Gastrocnemius medialis (tissue), 4 donors: ENCODE measurements at regions of chr3 and their contacts with region 1.

Region 1: GRCh38 chr3:122415720-122416654 is at the start of gene WDR5B:
- DNase-seq: peak; percentile 97 to 98
- ATAC-seq: peak; percentile 90
- H3K4me3 ChIP-seq: peak within 1 kb of the TSS; percentile 76 to 97 (median 77)
- H3K27ac ChIP-seq: peak within 1 kb of the TSS; percentile 88 to 98 (median 91)
- H3K4me1 ChIP-seq: peaks cover 35 to 43% of the 10 kb centered on the region in 2 donors
- H3K27me3 ChIP-seq: no peaks in the 10 kb centered on the region
- CTCF ChIP-seq: peak in 1 of 5 experiments; percentile 15
- POLR2A ChIP-seq: peak; percentile 90 to 93
- total RNA-seq, gene WDR5B: 1.4 to 3.0 (median 2.1) TPM

Region 2: DNA sequence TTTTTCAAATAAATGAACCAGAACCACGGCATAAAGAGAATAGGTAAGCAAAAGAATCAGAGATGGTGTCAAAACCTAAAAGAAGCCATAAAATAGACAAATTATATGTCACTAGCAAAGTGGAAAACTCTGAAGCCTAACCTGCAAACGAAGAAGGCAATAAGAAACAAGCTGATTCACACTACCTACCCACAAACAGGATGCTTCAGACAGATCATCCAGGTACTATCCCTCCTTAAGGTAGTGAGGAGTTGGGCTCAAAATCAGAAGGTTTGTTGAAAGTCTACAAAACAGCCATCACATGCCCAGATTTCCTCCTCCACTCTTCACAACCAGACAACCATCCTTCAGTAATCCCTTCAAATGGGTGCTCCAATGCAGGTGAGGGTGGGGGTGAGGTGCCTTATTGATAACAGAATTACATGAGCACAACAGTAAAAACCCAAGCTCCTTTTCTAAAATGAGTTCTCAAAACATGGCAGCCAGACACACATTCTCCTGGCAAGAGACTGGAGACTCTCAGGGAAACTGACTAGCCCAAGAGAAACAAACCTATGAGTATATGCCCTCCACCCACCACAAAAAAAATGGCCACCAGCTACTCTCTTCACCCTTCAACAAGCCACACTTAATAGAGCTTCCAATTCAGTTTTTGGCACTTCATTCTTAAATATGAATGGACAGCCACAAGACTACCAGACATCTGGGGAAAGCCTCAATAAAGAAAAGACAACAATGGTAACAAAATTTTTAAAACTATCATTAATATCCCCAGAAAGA is 92.3 kb after region 1 on chr3:
- in situ Hi-C with region 1: loop called in 2 of 4 experiments (anchors 10 kb)
- intact Hi-C with region 1: no loop called
- DNase-seq: no peak
- ATAC-seq: peak; percentile 11 to 21
- H3K4me3 ChIP-seq: no peak overlapping the region
- H3K27ac ChIP-seq: peak overlapping the region; percentile 94 to 99 (median 97)
- H3K4me1 ChIP-seq: peaks cover 67 to 86% of the 10 kb centered on the region in 2 donors
- H3K27me3 ChIP-seq: no peaks in the 10 kb centered on the region
- CTCF ChIP-seq: no peak
- POLR2A ChIP-seq: no peak

Region 3: GRCh38 chr3:122514123-122515019 is 98.4 kb after region 1 on chr3 and contains the start of gene KPNA1:
- in situ Hi-C with region 1: loop called in 2 of 4 experiments (anchors 10 kb)
- intact Hi-C with region 1: loop called (anchors 1 kb)
- DNase-seq: peak; percentile 90 to 93
- ATAC-seq: peak; percentile 76 to 84
- H3K4me3 ChIP-seq: peak within 1 kb of the TSS; percentile 65 to 94 (median 84)
- H3K27ac ChIP-seq: peak within 1 kb of the TSS; percentile 94 to 99 (median 97)
- H3K4me1 ChIP-seq: peaks cover 39 to 44% of the 10 kb centered on the region in 2 donors
- H3K27me3 ChIP-seq: no peaks in the 10 kb centered on the region
- CTCF ChIP-seq: no peak
- POLR2A ChIP-seq: peak; percentile 99 to 100
- total RNA-seq, gene KPNA1: 108 to 119 (median 112) TPM

Region 4: DNA sequence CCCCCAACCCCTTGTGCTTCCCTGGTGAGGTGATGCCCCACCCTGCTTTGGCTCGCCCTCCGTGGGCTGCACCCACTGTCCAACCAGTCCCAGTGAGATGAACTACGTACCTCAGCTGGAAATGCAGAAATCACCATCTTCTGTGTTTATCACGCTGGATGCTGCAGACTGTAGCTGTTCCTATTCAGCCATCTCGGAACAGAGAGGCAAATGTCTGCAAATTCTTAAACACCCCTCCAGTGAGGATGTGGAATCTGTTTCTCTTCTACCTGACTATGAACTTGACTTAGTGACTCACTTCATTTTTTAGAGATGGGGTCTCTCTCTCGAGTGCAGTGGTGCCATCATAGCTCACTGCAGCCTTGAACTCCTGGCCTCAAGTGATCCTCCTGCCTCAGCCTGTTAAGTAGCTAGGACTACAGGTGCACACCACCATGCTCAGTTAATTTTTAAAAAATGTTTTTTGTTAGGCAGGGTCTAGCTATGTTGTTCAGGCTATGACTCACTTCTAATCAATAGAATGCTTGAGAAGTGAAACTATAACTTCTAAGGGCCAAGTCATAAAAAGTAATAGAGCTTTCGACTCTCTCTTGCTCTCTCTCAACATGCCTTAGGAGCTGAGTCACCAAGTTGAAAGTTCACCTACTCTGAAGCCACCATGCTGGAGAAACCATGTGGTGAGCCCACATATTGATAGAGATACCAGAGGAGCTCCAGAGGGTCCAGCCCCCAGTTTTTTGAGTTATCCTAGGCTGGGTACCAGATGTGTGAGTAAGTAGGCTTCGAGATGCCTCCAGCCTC is 253.1 kb after region 1 on chr3:
- in situ Hi-C with region 1: no loop called
- intact Hi-C with region 1: no loop called
- DNase-seq: no peak
- ATAC-seq: no peak
- H3K4me3 ChIP-seq: no peak overlapping the region
- H3K27ac ChIP-seq: no peak overlapping the region
- H3K4me1 ChIP-seq: no peaks in the 10 kb centered on the region
- H3K27me3 ChIP-seq: no peaks in the 10 kb centered on the region
- CTCF ChIP-seq: no peak
- POLR2A ChIP-seq: no peak

Region 5: DNA sequence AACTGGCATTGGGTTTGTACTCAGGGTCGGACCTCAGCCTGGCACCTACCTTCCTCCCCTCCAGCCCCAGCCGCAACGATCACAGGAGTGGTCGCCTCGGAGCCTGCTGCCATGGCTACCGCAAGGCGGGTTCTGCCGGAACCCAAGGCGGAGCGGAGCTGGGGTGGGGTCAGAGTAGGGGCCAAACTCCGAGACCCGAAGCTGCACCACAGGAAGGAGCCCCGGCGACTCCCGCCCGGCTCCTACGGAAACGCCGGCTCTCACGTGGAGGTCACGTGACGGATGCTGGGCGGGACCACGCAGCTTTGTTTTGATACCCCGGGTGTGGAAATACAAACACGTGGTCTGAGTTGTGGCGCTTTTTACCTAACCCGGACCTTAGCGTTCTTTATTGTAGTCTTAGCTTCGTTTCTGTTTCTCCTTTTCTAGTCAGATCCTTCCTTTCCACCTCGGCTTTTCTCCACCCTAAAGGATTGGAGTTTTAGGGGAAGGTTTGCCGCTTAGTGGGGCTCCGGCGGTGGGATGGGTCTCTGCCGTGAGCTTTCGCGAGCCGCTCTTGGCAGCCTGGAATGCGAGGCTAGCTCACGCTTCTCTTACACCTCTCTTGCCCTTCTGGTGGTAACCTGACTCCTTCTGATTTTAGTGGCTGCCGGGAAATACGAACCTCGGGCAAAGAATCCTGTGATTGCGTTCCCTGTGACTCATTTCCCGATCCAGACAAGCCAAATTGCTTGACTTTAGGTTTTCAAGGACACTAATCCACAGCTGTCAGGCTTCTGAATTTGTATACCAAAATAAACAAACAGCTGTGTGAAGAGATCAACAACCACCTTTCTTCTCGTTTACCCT is 377.8 kb after region 1 on chr3 and contains the start of gene HSPBAP1:
- in situ Hi-C with region 1: no loop called
- intact Hi-C with region 1: loop called (anchors 1 kb)
- DNase-seq: peak; percentile 94 to 96
- ATAC-seq: peak; percentile 76 to 84
- H3K4me3 ChIP-seq: peak within 1 kb of the TSS; percentile 74 to 90 (median 78)
- H3K27ac ChIP-seq: peak within 1 kb of the TSS; percentile 95 to 99 (median 96)
- H3K4me1 ChIP-seq: peaks cover 55 to 56% of the 10 kb centered on the region in 2 donors
- H3K27me3 ChIP-seq: no peaks in the 10 kb centered on the region
- CTCF ChIP-seq: peak in 2 of 5 experiments; percentile 39 to 50
- POLR2A ChIP-seq: peak; percentile 96
- total RNA-seq, gene HSPBAP1: 14.5 to 30.7 (median 17.0) TPM